ENCODE measurements at regions of chr22 and their contacts with region 1.

Region 1: GRCh38 chr22:21766691-21767462 is 31.3 kb upstream of the YPEL1 start:
- DNase-seq: peak; percentile 72
- H3K4me3 Mint-ChIP-seq: peak overlapping the region; percentile 55
- H3K27ac Mint-ChIP-seq: peak overlapping the region; percentile 73
- H3K4me1 Mint-ChIP-seq: peaks cover 79% of the 10 kb centered on the region
- H3K27me3 Mint-ChIP-seq: no peaks in the 10 kb centered on the region

Region 2: GRCh38 chr22:21587803-21588611 is 178.9 kb before region 1 on chr22:
- intact Hi-C with region 1: loop called (anchors 10 kb)
- DNase-seq: peak; percentile 38
- H3K4me3 Mint-ChIP-seq: peak overlapping the region; percentile 13
- H3K27ac Mint-ChIP-seq: peak overlapping the region; percentile 85
- H3K4me1 Mint-ChIP-seq: peaks cover 47% of the 10 kb centered on the region
- H3K27me3 Mint-ChIP-seq: no peaks in the 10 kb centered on the region

Region 3: DNA sequence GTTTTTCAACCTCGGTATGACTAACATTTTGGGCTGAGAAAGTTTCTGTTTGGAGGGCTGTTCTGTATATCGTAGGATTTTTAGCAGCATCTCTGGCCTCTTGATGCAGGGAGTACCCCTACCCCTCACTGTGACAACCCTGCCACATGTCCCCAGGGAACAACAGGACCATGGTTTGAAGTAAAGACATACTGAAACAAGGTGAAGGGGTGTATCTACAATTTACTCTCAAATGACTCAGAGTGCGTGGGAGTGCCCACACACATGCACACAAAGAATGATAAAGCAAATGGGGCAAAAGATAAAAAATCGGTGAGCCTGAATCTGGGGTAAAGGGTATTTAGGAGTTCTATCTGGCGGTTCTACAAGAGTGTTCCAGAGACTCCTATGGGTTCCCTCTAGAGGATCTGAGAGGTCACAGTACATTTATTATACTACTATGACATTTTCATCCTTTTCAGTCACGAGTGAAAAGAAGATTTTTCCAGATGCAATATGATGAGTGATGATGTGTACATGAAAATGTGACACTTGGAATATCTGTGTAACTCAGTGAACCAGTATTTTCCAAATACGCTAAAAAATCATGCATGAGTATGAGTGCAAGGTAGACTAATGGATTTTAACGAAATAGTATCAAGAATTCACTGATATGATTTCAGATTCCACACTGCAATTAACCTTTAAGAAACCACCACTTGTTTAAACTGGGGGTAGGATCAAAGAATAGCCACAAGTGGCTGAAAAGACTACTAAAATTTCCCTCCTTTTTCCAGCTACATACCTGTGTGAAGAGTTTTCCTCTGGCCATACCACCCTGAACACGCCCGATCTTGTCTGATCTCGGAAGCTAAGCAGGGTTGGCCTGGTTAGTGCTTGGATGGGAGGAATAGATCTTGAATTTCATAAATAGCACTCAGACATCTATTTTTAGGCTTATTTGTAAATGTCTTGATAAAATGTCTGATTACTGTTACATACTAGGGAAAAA is 25.1 kb after region 1 on chr22:
- intact Hi-C with region 1: loop called (anchors 1 kb)
- DNase-seq: peak; percentile 12
- H3K4me3 Mint-ChIP-seq: no peak overlapping the region
- H3K27ac Mint-ChIP-seq: peak overlapping the region; percentile 72
- H3K4me1 Mint-ChIP-seq: peaks cover 12% of the 10 kb centered on the region
- H3K27me3 Mint-ChIP-seq: no peaks in the 10 kb centered on the region

Region 4: GRCh38 chr22:21938071-21938822 is 171.4 kb after region 1 on chr22:
- intact Hi-C with region 1: loop called (anchors 2 kb)
- DNase-seq: peak; percentile 87
- H3K4me3 Mint-ChIP-seq: peak overlapping the region; percentile 75
- H3K27ac Mint-ChIP-seq: peak overlapping the region; percentile 67
- H3K4me1 Mint-ChIP-seq: peaks cover 44% of the 10 kb centered on the region
- H3K27me3 Mint-ChIP-seq: peaks cover 1% of the 10 kb centered on the region

Region 5: DNA sequence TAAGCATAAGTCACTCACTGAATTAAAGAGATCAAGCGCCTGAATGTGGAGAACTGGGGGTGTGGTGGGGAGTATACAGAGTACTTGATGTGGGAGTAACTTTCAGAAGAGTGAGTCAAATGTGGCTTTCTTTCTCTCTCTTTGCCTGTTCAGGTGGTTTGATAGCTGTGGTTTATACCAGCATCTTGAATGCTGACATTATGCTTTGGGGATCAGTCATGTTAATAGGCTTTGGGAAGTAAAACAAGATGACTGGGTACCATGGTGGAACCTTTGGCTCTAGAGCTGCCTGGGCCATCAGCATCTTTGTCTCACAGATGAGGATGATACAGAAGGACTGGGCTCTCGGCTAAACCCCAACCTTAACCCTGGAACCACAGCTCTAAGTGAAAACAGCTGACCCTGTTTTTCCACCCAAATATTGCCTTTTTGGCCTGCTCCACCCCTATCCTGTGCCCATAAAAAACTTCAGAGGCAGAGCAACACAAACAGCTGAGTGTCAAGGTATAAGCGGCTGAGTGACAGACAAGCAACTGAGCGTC is 1245.3 kb after region 1 on chr22:
- intact Hi-C with region 1: loop called (anchors 10 kb)
- DNase-seq: peak; percentile 21
- H3K4me3 Mint-ChIP-seq: no peak overlapping the region
- H3K27ac Mint-ChIP-seq: peak overlapping the region; percentile 55
- H3K4me1 Mint-ChIP-seq: peaks cover 30% of the 10 kb centered on the region
- H3K27me3 Mint-ChIP-seq: peaks cover 41% of the 10 kb centered on the region